H1 (cell line): ENCODE measurements at regions of chr2 and their contacts with region 1.

Region 1: DNA sequence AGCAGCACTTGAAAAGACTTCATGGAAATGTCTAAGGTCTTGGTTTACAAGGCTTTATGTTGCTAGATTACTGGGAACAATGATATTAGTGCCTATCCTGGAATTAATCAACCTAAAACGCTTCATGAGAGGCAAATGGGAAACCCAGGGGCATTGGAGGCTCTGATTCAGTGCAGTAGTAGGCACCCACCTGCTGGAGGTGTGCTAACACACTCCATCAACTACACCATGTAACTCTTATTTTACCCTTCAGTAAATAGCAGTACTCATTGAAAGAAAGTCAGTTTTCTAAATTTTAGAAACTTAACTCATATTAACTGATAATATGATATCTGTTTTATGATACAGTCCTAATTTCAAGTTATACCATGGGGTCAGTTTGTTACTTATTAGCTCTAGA is 17.4 kb upstream of the HNRNPA3 start:
- DNase-seq: no peak
- H3K4me3 ChIP-seq: no peak overlapping the region
- H3K27ac ChIP-seq: no peak overlapping the region
- H3K4me1 ChIP-seq: no peaks in the 10 kb centered on the region
- H3K27me3 ChIP-seq: no peaks in the 10 kb centered on the region
- CTCF ChIP-seq: peak; percentile 34 to 54 (median 37); a peak in 3 of 4 replicates
- EP300 ChIP-seq: no peak
- POLR2A ChIP-seq: no peak
- RAD21 ChIP-seq: peak; percentile 54 to 56

Region 2: GRCh38 chr2:177029480-177029879 is 165.7 kb before region 1 on chr2:
- CTCF ChIA-PET with region 1: no interaction called
- POLR2A ChIA-PET with region 1: no interaction called
- DNase-seq: no peak
- H3K4me3 ChIP-seq: no peak overlapping the region
- H3K27ac ChIP-seq: no peak overlapping the region
- H3K4me1 ChIP-seq: peaks cover 0 to 9% (median 0%) of the 10 kb centered on the region in 4 experiments; a peak in 1 of 7 replicates
- H3K27me3 ChIP-seq: no peaks in the 10 kb centered on the region
- CTCF ChIP-seq: peak; percentile 66 to 75 (median 67)
- EP300 ChIP-seq: no peak
- POLR2A ChIP-seq: no peak
- RAD21 ChIP-seq: peak; percentile 42 to 46

Region 3: GRCh38 chr2:177106212-177106611 is 89.0 kb before region 1 on chr2:
- CTCF ChIA-PET with region 1: no interaction called
- POLR2A ChIA-PET with region 1: no interaction called
- DNase-seq: no peak
- H3K4me3 ChIP-seq: no peak overlapping the region
- H3K27ac ChIP-seq: no peak overlapping the region
- H3K4me1 ChIP-seq: no peaks in the 10 kb centered on the region
- H3K27me3 ChIP-seq: no peaks in the 10 kb centered on the region
- CTCF ChIP-seq: peak; percentile 35 to 81 (median 48); a peak in 3 of 4 replicates
- EP300 ChIP-seq: no peak
- POLR2A ChIP-seq: no peak
- RAD21 ChIP-seq: peak; percentile 46 to 49

Region 4: GRCh38 chr2:177129610-177130009 is 65.6 kb before region 1 on chr2:
- CTCF ChIA-PET with region 1: no interaction called
- POLR2A ChIA-PET with region 1: no interaction called
- DNase-seq: no peak
- H3K4me3 ChIP-seq: no peak overlapping the region
- H3K27ac ChIP-seq: no peak overlapping the region
- H3K4me1 ChIP-seq: 0 out of 7 replicates have a peak, but pooled peaks cover 0 to 2% (median 0%) of the 10 kb centered on the region in 4 experiments
- H3K27me3 ChIP-seq: no peaks in the 10 kb centered on the region
- CTCF ChIP-seq: no peak
- EP300 ChIP-seq: no peak
- POLR2A ChIP-seq: no peak
- RAD21 ChIP-seq: no peak

Region 5: DNA sequence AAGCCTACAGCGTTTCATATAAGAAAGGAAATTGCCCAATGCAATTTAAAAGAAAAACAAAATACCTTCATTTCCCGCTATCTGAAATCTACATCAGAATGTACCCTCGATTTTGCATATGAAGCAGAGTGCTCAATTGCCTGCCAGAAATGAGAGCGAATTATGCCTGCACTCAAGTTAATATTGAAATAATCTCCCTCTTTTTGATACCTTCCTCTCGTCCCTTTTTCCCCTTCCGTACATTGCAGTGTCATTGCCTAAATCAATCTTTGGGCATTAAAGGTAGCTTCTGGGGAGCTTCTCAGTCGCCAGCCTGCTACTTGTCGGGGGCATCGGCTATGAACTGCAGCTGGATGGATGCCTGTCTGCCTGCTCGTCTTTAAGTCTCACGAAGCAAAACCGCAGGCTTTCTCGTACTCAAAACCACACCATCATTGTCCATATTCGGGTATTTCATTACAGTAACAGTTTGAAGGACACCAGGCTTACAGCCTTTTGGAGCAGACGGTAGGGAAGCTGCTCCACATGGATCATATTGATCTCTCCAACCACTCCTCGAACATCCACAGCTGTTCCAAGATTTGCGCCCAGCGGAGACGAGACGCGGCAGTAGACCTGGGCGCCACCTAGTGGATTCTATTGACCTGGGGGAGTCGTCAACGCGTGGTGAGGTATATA is 46.6 kb before region 1 on chr2:
- CTCF ChIA-PET with region 1: interaction called, 11 read pairs
- POLR2A ChIA-PET with region 1: interaction called, 3 read pairs
- DNase-seq: peak; percentile 59 to 93
- H3K4me3 ChIP-seq: peak overlapping the region; percentile 14 to 60 (median 59); a peak in 7 of 8 replicates
- H3K27ac ChIP-seq: no peak overlapping the region
- H3K4me1 ChIP-seq: no peaks in the 10 kb centered on the region; a peak in 2 of 7 replicates
- H3K27me3 ChIP-seq: peaks cover 0 to 7% (median 1%) of the 10 kb centered on the region in 4 experiments; a peak in 3 of 7 replicates
- CTCF ChIP-seq: peak; percentile 89 to 90 (median 90)
- EP300 ChIP-seq: no peak
- POLR2A ChIP-seq: no peak
- RAD21 ChIP-seq: peak; percentile 73 to 82

Region 6: DNA sequence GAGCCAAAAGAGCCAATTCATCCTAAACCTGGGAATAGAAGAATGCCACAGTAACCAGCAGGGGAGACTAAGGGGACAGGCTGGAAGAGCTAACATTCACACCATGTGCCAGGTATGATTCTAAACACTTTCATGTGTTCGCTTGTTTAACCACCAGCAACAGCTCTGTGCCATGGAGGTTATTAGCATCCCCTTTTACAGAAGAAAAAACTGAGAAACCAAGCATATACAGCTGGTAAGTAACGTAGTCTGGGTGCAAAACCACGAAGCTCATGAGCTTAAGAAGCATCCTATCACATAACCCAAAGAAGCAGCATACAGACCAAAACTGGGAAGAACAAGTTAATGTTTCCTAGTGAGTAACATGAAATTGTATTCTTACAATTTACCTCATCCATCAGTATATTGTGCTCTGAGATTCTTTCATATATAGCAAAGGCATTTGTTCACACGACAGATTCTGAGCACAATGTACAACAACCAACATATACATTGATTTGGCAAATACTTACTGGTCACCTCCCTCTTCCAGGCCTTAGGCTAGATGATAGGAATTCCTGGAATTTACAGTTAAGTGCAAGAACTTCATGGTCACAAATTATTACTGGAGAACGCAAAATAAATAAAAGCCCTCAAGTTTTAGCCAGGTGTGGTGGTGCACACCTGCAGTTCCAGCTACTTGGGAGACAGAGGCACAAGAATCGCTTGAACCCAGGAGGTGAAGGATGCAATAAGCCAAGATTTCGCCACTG is 19.1 kb before region 1 on chr2:
- CTCF ChIA-PET with region 1: interaction called, 32 read pairs
- POLR2A ChIA-PET with region 1: interaction called, 4 read pairs
- DNase-seq: no peak
- H3K4me3 ChIP-seq: no peak overlapping the region
- H3K27ac ChIP-seq: no peak overlapping the region
- H3K4me1 ChIP-seq: peaks cover under 1 to 14% (median 4%) of the 10 kb centered on the region in 4 experiments; a peak in 4 of 7 replicates
- H3K27me3 ChIP-seq: no peaks in the 10 kb centered on the region
- CTCF ChIP-seq: no peak
- EP300 ChIP-seq: no peak
- POLR2A ChIP-seq: no peak
- RAD21 ChIP-seq: no peak

Region 7: DNA sequence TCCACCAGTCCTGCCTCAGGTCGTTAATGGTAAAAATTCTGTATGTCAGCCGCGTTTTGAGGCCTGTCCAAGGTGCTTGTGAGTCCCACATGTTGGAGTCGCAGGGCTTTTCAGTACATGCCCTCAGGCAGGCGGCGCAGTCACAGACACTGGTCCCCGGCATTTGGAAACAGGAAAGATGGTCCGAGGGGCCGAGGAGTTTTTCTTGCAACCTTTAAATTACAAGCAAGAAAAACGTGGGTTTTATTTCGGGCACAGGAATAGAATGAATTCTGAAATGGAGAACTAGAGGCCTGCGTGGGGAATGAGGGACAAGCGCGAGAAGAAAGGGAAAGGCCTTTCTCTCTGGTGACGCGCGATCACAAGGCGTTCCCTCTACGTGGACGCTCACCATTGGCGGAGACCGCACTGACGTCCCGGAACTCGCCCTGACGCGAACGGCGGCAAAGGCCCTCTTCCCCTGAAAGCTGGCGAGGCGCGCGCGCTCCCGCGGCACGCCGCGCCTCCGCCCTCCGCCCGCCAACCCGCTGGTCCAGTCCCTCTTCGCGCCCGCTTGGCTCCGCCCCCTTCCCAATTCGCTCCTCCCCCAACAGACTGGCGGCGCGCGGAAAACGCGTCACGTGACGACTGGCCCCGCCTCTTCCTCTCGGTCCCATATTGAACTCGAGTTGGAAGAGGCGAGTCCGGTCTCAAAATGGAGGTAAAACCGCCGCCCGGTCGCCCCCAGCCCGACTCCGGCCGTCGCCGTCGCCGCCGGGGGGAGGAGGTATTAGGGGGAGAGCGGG is 17.1 kb after region 1 on chr2 and contains the start of gene HNRNPA3:
- CTCF ChIA-PET with region 1: interaction called, 9 read pairs
- POLR2A ChIA-PET with region 1: interaction called, 102 read pairs
- DNase-seq: peak; percentile 98 to 100
- H3K4me3 ChIP-seq: peak within 1 kb of the TSS; percentile 73 to 91 (median 79)
- H3K27ac ChIP-seq: peak within 1 kb of the TSS; percentile 99
- H3K4me1 ChIP-seq: peaks cover 2 to 5% (median 4%) of the 10 kb centered on the region in 4 experiments; a peak in 5 of 7 replicates
- H3K27me3 ChIP-seq: no peaks in the 10 kb centered on the region
- CTCF ChIP-seq: no peak
- EP300 ChIP-seq: no peak; a peak in 1 of 3 replicates
- POLR2A ChIP-seq: peak; percentile 70 to 97
- RAD21 ChIP-seq: no peak
- total RNA-seq, gene HNRNPA3: 390 and 408 TPM in 2 replicates

Region 8: GRCh38 chr2:177229448-177230242 is 34.5 kb after region 1 on chr2:
- CTCF ChIA-PET with region 1: interaction called, 33 read pairs
- POLR2A ChIA-PET with region 1: interaction called, 6 read pairs
- DNase-seq: no peak
- H3K4me3 ChIP-seq: no peak overlapping the region
- H3K27ac ChIP-seq: no peak overlapping the region
- H3K4me1 ChIP-seq: no peaks in the 10 kb centered on the region
- H3K27me3 ChIP-seq: no peaks in the 10 kb centered on the region
- CTCF ChIP-seq: no peak
- EP300 ChIP-seq: no peak
- POLR2A ChIP-seq: no peak
- RAD21 ChIP-seq: no peak

Region 9: DNA sequence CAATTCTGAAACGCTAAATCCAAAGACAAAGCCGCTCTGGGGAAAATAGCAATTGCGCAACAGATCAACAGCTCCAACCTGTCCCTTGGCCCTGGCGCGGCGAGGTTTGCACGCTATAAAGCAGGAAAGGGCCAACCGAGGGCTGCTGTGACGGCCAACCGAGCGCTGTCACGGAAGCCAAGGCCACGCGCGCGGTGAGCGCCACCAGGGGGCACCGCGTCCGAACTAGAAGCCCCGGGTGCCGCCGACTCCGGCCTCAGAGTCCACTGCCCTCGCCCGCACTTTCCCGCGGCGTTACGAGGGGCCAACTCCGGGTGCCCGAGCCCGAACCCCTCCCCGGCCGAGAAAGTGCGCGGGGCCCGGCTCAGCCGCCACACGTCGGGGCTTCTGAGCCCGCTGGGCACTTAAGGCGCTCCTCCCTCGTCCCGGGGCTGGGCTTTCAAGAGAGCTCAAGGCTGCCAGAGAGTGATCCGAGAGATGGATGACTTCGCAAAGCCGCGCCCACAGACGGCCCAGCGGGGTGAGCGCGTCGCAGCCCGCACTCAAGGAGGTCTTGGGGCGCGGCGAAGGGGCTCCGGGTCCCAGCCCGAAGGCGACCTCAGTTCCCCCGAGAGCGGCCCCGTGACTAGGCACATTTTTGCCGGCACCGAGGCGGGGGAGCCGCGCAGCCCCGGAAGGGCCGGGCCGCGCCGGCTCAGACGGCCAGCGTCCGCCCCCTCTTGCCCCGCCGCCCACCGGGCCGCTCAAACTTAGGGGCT is 68.4 kb after region 1 on chr2:
- CTCF ChIA-PET with region 1: interaction called, 3 read pairs
- POLR2A ChIA-PET with region 1: interaction called, 11 read pairs
- DNase-seq: peak; percentile 44 to 88
- H3K4me3 ChIP-seq: peak overlapping the region; percentile 71 to 82 (median 78)
- H3K27ac ChIP-seq: peak overlapping the region; percentile 78; the same call in 1 of the 2 replicates
- H3K4me1 ChIP-seq: peaks cover 0 to 2% (median 2%) of the 10 kb centered on the region in 4 experiments; a peak in 3 of 7 replicates
- H3K27me3 ChIP-seq: no peaks in the 10 kb centered on the region
- CTCF ChIP-seq: peak; percentile 47 to 57 (median 50); a peak in 3 of 4 replicates
- EP300 ChIP-seq: no peak; a peak in 1 of 3 replicates
- POLR2A ChIP-seq: peak; percentile 34 to 73
- RAD21 ChIP-seq: peak; percentile 31 to 55